ENCODE measurements at regions of chr14 and their contacts with region 1.

Region 1: DNA sequence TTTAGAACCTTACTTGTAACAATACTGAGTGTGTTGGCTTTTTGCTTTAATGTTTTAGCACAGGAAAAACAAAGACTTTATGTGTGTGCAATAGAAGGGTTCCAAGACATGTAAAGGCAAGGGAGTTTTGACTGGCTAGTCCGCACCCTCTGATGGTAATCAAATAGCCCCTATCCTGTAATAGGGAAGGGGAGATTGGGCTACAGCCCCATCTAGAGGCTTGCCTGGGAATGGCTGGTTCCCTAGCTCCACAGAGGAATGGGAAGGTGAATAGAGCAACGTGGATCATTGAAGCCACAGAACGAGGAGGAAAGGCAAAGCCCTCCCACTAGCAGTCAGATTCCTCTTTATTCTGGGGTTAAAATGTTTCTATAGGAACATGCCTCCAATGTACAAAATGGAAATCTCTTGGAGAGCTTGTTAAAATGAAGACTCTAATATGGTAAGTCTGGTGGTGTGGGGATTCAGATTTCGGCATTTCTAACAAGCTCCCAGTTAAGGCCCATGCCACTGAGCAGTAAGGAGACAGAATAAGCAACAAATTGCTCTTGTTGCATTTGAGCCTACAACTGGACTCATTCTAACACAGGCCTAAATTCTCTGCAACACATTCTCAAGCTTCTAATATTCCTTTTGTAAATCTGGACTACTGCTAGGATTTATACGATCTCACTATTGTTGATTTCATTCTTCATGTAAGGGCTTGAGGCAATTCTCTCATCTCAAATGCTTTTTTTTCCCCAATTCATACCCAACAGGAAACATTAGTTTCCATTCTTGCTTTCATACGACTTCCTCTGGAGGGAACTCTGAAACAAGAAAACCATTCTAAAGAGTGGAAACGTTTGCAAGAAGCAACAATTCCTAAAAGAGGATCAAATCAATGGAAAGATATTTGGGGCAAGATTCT is 57.1 kb downstream of the NIN start:
- DNase-seq: no peak
- H3K4me3 ChIP-seq: no peak overlapping the region
- H3K27ac ChIP-seq: no peak overlapping the region
- H3K27me3 ChIP-seq: no peaks in the 10 kb centered on the region
- CTCF ChIP-seq: peak; percentile 87

Region 2: DNA sequence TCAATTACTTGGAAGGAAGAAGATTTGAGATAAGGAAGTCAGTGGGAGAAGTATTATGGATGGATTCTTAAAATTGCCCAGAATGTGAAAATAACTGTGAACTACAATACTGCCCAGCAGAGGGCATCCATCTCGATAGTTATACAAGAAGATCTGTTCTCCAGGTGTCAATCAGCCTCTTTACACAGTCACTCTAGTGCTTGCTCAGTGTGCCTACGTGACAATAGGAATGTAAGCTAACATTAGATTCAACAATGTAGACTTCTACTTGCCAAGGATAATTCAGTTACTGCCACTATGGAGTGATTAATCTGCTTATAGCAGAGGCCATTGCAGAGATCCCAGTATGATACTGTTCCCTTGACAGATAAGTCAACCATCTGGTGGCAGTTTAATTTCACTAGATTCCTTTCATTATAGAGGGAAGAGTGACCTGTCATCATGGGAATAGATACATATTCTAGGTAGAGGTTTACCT is 230.9 kb before region 1 on chr14:
- CTCF ChIA-PET with region 1: interaction called, 91 read pairs
- POLR2A ChIA-PET with region 1: no interaction called
- DNase-seq: no peak
- H3K4me3 ChIP-seq: no peak overlapping the region
- H3K27ac ChIP-seq: no peak overlapping the region
- H3K27me3 ChIP-seq: peaks cover 2% of the 10 kb centered on the region
- CTCF ChIP-seq: peak; percentile 60

Region 3: GRCh38 chr14:50599700-50600444 is 174.0 kb before region 1 on chr14:
- CTCF ChIA-PET with region 1: interaction called, 97 read pairs
- POLR2A ChIA-PET with region 1: interaction called, 3 read pairs
- DNase-seq: no peak
- H3K4me3 ChIP-seq: no peak overlapping the region
- H3K27ac ChIP-seq: no peak overlapping the region
- H3K27me3 ChIP-seq: no peaks in the 10 kb centered on the region
- CTCF ChIP-seq: peak; percentile 66

Region 4: DNA sequence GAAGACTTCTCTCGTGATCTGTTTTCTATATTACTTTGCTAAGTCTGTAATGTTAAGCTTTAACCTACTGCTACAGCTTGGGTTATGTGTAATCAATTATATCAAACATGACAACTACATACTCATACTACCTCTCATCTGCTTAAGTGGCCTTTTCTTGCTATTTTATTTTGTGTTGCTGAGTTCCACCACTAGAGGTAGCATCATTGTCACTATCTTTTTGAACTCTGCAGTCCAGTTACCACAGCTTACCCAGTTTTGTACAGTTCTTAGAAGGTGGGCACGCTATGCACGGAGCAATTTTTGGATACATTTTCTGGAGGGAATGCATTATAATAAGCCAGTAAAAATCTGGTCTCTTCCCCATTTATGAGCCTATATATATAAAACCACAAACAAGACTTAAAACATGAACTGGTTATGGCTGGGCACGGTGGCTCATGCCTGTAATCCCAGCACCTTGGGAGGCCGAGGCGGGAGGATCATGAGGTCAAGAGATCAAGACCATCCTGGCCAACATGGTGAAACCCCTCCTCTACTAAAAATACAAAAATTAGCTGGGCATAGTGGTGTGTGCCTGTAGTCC is 154.2 kb before region 1 on chr14:
- CTCF ChIA-PET with region 1: interaction called, 29 read pairs
- POLR2A ChIA-PET with region 1: interaction called, 3 read pairs
- DNase-seq: no peak
- H3K4me3 ChIP-seq: no peak overlapping the region
- H3K27ac ChIP-seq: no peak overlapping the region
- H3K27me3 ChIP-seq: no peaks in the 10 kb centered on the region
- CTCF ChIP-seq: peak; percentile 71

Region 5: GRCh38 chr14:50667996-50668825 is 105.7 kb before region 1 on chr14 and contains the start of gene SAV1:
- CTCF ChIA-PET with region 1: interaction called, 5 read pairs
- POLR2A ChIA-PET with region 1: interaction called, 15 read pairs
- DNase-seq: peak; percentile 75
- H3K4me3 ChIP-seq: peak within 1 kb of the TSS; percentile 79
- H3K27ac ChIP-seq: peak within 1 kb of the TSS; percentile 73
- H3K27me3 ChIP-seq: no peaks in the 10 kb centered on the region
- CTCF ChIP-seq: no peak
- polyA plus RNA-seq, gene SAV1: 27.6 and 33.8 TPM in 2 replicates

Region 6: DNA sequence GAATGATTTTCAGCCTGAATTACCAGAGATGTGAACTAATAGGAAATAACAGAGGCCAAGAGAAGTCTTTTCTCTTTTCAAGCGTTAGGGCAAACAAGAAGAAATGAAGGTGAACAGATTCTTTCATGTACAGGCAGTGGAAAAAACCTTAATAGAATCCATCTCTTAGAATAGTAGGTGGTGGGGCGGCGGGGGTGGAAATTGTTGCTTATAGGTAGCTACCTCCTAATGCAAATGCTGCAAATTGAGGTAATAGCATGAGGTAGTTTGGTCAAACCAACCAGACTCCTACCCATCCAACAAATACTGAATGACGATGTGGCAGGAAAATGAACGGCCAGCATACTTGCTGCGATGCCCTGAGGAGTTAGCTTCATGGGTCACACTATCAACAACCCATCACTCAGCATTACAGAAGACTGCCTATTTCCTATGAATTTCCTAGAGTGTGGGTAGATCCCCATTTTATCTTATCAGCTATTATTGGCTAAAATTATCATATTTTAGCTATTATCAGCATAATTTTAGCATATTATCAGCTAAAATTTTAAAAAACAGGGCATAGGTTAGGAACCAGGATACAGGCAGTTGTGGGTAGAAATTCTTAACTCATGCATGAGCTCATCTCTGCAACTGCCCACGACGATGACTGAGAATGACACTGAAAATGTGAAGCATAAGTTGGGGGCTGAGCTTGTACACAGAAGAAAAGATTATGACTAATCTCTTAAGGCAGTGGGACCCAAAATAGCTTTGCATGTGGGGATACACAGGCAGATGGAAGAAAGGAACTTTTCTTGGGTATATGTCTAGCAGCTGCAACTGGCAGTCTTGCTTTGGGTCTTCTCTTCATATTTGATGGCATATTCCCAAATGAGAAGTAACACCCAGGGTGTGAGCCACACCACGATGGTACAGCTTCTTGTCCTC is 11.6 kb before region 1 on chr14:
- CTCF ChIA-PET with region 1: interaction called, 100 read pairs
- POLR2A ChIA-PET with region 1: interaction called, 11 read pairs
- DNase-seq: peak; percentile 38
- H3K4me3 ChIP-seq: no peak overlapping the region
- H3K27ac ChIP-seq: no peak overlapping the region
- H3K27me3 ChIP-seq: no peaks in the 10 kb centered on the region
- CTCF ChIP-seq: no peak

Region 7: DNA sequence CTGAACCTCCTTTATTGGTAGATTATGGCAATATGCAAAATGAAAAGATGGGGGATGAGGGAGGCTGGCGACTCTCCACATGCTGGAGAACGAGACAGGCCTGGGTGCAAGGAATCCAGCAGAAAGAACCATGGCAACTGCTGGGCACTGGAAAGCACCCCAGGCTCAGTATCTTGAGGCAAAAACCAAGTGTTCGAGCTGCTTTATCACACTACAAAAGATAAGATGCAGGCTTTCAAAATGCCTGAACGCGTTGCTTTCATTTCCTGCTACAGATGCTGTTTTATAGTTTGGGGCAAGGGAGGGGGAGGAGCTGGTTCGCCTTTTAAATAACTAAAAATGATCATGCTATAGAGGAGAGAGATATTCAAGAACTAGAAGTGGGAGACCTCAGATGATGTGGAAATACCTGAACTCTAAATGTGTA is 18.2 kb after region 1 on chr14:
- CTCF ChIA-PET with region 1: interaction called, 42 read pairs
- POLR2A ChIA-PET with region 1: no interaction called
- DNase-seq: no peak
- H3K4me3 ChIP-seq: no peak overlapping the region
- H3K27ac ChIP-seq: no peak overlapping the region
- H3K27me3 ChIP-seq: no peaks in the 10 kb centered on the region
- CTCF ChIP-seq: no peak